CD4-positive, alpha-beta T cell (primary cell): ENCODE measurements at regions of chr2 and their contacts with region 1.

Region 1: GRCh38 chr2:20661067-20661980 is 5.6 kb upstream of the GDF7 start:
- DNase-seq: peak; percentile 43 to 85 (median 56)
- ATAC-seq: peak; percentile 84
- H3K4me3 ChIP-seq: no peak overlapping the region
- H3K4me3 Mint-ChIP-seq: no peak overlapping the region
- H3K27ac ChIP-seq: no peak overlapping the region
- H3K27ac Mint-ChIP-seq: no peak overlapping the region
- H3K4me1 ChIP-seq: peaks cover 18% of the 10 kb centered on the region
- H3K4me1 Mint-ChIP-seq: peaks cover 13% of the 10 kb centered on the region
- H3K27me3 ChIP-seq: peaks cover 46 to 62% of the 10 kb centered on the region in 2 experiments
- H3K27me3 Mint-ChIP-seq: peaks cover 78% of the 10 kb centered on the region
- CTCF ChIP-seq: peak; percentile 93

Region 2: DNA sequence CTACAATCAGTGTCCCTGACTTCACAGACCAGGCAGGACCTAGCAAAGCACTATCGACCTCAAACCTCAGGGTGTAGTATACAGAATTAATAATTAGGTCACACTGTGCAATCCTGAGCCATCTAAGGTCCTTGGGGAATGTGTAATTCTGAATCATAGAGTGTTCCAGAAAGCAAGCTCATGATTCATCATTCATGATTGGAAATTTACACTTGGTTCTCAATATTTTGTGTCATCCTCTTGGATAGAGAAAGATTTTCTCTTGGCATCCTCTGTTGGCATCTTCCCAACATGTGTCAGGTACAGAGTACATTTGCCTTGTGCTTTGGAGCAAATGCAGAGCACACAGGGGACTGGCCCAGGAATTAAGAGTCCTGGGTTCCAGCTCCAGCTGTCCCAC is 1827.0 kb before region 1 on chr2:
- CTCF ChIA-PET with region 1: no interaction called
- POLR2A ChIA-PET with region 1: no interaction called
- intact Hi-C with region 1: no loop called
- DNase-seq: no peak
- ATAC-seq: no peak
- H3K4me3 ChIP-seq: no peak overlapping the region
- H3K4me3 Mint-ChIP-seq: no peak overlapping the region
- H3K27ac ChIP-seq: no peak overlapping the region
- H3K27ac Mint-ChIP-seq: no peak overlapping the region
- H3K4me1 ChIP-seq: no peaks in the 10 kb centered on the region
- H3K4me1 Mint-ChIP-seq: no peaks in the 10 kb centered on the region
- H3K27me3 ChIP-seq: no peaks in the 10 kb centered on the region
- H3K27me3 Mint-ChIP-seq: no peaks in the 10 kb centered on the region
- CTCF ChIP-seq: no peak

Region 3: GRCh38 chr2:20490260-20491181 is 170.8 kb before region 1 on chr2:
- CTCF ChIA-PET with region 1: no interaction called
- POLR2A ChIA-PET with region 1: no interaction called
- intact Hi-C with region 1: no loop called
- DNase-seq: no peak
- ATAC-seq: no peak
- H3K4me3 ChIP-seq: no peak overlapping the region
- H3K4me3 Mint-ChIP-seq: no peak overlapping the region
- H3K27ac ChIP-seq: no peak overlapping the region
- H3K27ac Mint-ChIP-seq: no peak overlapping the region
- H3K4me1 ChIP-seq: no peaks in the 10 kb centered on the region
- H3K4me1 Mint-ChIP-seq: no peaks in the 10 kb centered on the region
- H3K27me3 ChIP-seq: no peaks in the 10 kb centered on the region
- H3K27me3 Mint-ChIP-seq: no peaks in the 10 kb centered on the region
- CTCF ChIP-seq: no peak

Region 4: GRCh38 chr2:20593072-20594034 is 68.0 kb before region 1 on chr2:
- CTCF ChIA-PET with region 1: no interaction called
- POLR2A ChIA-PET with region 1: no interaction called
- intact Hi-C with region 1: no loop called
- DNase-seq: peak in 1 of 14 experiments; percentile 27
- ATAC-seq: no peak
- H3K4me3 ChIP-seq: no peak overlapping the region
- H3K4me3 Mint-ChIP-seq: no peak overlapping the region
- H3K27ac ChIP-seq: no peak overlapping the region
- H3K27ac Mint-ChIP-seq: no peak overlapping the region
- H3K4me1 ChIP-seq: peaks cover 11% of the 10 kb centered on the region
- H3K4me1 Mint-ChIP-seq: no peaks in the 10 kb centered on the region
- H3K27me3 ChIP-seq: no peaks in the 10 kb centered on the region
- H3K27me3 Mint-ChIP-seq: no peaks in the 10 kb centered on the region
- CTCF ChIP-seq: no peak

Region 5: GRCh38 chr2:20702563-20702962 is 41.2 kb after region 1 on chr2:
- CTCF ChIA-PET with region 1: no interaction called
- POLR2A ChIA-PET with region 1: no interaction called
- intact Hi-C with region 1: no loop called
- DNase-seq: no peak
- ATAC-seq: no peak
- H3K4me3 ChIP-seq: no peak overlapping the region
- H3K4me3 Mint-ChIP-seq: no peak overlapping the region
- H3K27ac ChIP-seq: no peak overlapping the region
- H3K27ac Mint-ChIP-seq: no peak overlapping the region
- H3K4me1 ChIP-seq: no peaks in the 10 kb centered on the region
- H3K4me1 Mint-ChIP-seq: no peaks in the 10 kb centered on the region
- H3K27me3 ChIP-seq: no peaks in the 10 kb centered on the region
- H3K27me3 Mint-ChIP-seq: no peaks in the 10 kb centered on the region
- CTCF ChIP-seq: no peak

Region 6: DNA sequence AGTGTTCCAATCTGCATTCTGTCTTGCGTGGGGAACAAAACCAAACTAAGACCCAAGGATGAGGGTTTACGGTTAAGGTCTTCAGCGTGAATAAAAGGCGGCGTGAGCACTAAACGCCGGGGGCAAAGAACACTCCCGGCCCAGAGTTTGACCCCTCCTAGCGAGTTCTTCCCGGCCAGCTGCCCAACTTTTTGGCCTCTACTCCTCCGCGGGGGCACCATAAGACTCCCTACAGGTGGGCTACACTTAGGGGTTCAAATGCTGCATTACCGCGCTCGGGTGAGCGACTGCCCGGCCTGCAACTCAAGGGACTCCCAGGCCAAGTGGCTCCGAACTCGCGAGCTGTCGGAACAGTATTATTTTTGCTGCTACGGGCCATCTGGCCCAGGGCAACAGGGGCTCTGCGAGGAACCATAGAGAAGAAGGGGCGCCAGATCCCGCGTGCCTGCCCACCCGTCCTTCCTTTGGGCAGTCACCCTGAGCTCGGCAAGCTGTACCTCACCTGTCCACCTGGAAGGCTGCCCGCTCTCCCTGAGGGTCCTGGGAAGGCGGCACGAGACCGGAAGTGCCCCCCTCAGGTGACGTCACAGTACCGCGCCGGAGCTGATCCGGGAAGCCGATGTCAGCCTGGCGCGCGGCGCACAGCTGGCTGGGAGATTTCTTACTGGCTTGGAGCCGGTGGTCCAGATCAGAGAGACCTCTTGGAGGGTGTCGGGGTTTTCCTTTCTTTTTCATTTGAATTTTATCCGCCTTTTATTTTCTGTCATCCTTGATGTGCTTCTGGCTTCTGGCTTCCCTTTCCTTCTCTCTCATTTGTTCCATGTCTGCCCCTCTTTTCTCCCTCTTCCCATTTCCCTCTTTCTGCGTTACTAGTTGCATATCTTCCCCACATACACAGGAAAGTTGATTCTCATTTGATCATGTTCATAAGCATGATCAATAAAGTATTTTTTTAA is 161.5 kb after region 1 on chr2 and contains the start of gene LDAH:
- CTCF ChIA-PET with region 1: no interaction called
- POLR2A ChIA-PET with region 1: interaction called, 5 read pairs
- intact Hi-C with region 1: loop called in 1 of 2 experiments (anchors 10 kb)
- DNase-seq: peak; percentile 69 to 90 (median 75)
- ATAC-seq: peak; percentile 82
- H3K4me3 ChIP-seq: peak within 1 kb of the TSS; percentile 94
- H3K4me3 Mint-ChIP-seq: peak within 1 kb of the TSS; percentile 94
- H3K27ac ChIP-seq: peak within 1 kb of the TSS; percentile 86 to 98
- H3K27ac Mint-ChIP-seq: peak within 1 kb of the TSS; percentile 99
- H3K4me1 ChIP-seq: peaks cover 9% of the 10 kb centered on the region
- H3K4me1 Mint-ChIP-seq: peaks cover 42% of the 10 kb centered on the region
- H3K27me3 ChIP-seq: no peaks in the 10 kb centered on the region
- H3K27me3 Mint-ChIP-seq: no peaks in the 10 kb centered on the region
- CTCF ChIP-seq: no peak
- total RNA-seq, gene LDAH: 6.5 to 7.2 TPM

Region 7: GRCh38 chr2:21310493-21310892 is 649.2 kb after region 1 on chr2:
- CTCF ChIA-PET with region 1: no interaction called
- POLR2A ChIA-PET with region 1: no interaction called
- intact Hi-C with region 1: loop called in 1 of 2 experiments (anchors 5 kb)
- DNase-seq: no peak
- ATAC-seq: no peak
- H3K4me3 ChIP-seq: no peak overlapping the region
- H3K4me3 Mint-ChIP-seq: no peak overlapping the region
- H3K27ac ChIP-seq: no peak overlapping the region
- H3K27ac Mint-ChIP-seq: no peak overlapping the region
- H3K4me1 ChIP-seq: no peaks in the 10 kb centered on the region
- H3K4me1 Mint-ChIP-seq: no peaks in the 10 kb centered on the region
- H3K27me3 ChIP-seq: no peaks in the 10 kb centered on the region
- H3K27me3 Mint-ChIP-seq: no peaks in the 10 kb centered on the region
- CTCF ChIP-seq: no peak